Activated naive CD4-positive, alpha-beta T cell treated with anti-CD3 and anti-CD28 coated beads for 36 hours (primary cell): ENCODE measurements at regions of chr1 and their contacts with region 1.

Region 1: GRCh38 chr1:46340404-46341221 is at the start of gene NSUN4:
- DNase-seq: peak; percentile 95
- H3K4me3 Mint-ChIP-seq: peak within 1 kb of the TSS; percentile 99
- H3K27ac Mint-ChIP-seq: peak within 1 kb of the TSS; percentile 100
- H3K4me1 Mint-ChIP-seq: peaks cover 51% of the 10 kb centered on the region
- H3K27me3 Mint-ChIP-seq: no peaks in the 10 kb centered on the region
- total RNA-seq, gene NSUN4: 33.6 to 37.8 TPM

Region 2: DNA sequence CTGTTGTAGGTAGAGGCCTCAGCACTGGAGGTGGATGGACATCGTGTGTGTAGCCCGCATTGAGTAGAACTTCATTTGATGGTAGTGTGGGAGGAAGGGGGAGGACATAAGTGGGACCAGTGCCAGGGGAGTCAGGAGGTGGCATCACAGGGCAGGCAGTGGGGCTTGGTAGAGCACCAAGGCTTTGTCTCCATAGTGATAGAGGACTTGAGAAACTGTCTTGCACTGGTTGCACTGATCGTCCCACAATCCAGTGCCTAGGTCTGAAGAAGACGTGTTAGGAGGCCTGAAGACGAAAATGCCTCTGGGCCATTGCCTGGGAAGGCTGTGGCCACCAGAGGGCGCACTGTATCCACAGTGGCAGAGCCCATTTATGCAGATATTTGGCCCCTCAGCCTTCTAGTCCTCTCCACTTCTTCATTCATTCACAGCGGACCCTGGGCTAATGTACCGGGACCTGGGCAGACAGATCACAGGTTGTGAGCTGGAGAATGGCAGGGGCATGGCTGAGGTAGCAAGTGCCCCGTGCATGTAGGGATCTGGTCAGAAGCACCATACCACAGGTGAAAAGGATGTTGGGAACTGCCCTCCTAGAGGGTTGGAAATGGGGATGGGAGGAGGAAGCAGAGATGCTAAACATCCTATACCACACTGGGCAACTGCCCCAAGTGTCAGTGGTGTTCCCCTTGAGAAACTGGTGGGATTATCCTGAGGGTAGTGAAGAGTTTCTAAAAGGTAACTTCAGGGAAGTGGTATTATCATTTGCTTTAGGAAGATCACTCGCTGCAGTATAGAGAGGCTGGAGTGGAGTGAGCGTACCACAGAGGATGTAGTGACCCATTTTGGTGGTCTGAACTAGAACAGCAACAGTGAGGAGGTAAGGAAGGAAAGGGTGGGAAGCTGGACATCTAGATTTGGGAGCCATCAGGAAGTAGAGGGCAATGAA is 303.4 kb before region 1 on chr1:
- CTCF ChIA-PET with region 1: no interaction called
- intact Hi-C with region 1: loop called (anchors 10 kb)
- DNase-seq: peak; percentile 91
- H3K4me3 Mint-ChIP-seq: no peak overlapping the region
- H3K27ac Mint-ChIP-seq: no peak overlapping the region
- H3K4me1 Mint-ChIP-seq: no peaks in the 10 kb centered on the region
- H3K27me3 Mint-ChIP-seq: no peaks in the 10 kb centered on the region

Region 3: DNA sequence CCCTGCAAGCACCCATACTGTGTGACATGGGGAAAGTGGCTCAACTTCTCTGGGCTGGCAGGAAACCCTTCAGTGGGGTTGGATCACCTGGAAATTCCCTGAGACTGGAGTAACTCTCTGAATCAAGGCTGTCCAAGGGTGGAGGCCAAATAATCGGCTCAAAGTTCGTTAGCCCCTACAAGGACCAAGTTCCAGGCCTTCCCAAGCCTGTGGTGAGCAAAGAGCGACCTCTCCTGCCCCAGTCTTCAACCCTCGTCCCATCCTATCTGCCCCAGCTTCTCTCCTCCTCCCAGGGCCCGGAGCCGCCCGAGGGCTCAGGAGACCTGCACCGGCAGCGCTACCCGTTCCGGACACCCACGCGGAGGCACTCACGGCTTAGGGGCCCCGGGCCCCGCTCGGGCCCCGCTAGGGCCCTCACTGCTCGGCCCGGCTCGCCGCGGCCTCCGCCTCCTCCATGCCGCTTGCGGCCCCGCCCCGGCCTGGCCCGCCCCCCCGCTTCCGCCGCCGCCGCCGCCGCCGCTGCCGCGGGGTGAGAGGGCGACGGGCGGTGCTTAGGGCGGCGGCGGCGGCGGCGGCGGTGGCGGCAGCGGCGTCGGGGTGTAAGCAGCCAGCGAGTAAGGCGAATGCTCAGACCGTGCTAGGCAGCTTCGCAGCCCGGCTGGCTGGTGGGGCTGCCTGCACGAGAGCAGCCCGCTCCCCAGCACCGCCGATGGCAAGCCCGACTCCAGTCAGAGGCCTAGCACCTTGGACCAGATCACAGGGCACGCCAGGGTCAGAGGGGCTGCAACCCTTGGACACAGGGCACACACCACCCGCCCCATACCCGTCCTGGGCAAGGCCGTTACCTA is 142.4 kb before region 1 on chr1 and contains the start of gene POMGNT1:
- CTCF ChIA-PET with region 1: no interaction called
- intact Hi-C with region 1: loop called (anchors 1 kb)
- DNase-seq: peak; percentile 73
- H3K4me3 Mint-ChIP-seq: peak within 1 kb of the TSS; percentile 81
- H3K27ac Mint-ChIP-seq: peak within 1 kb of the TSS; percentile 70
- H3K4me1 Mint-ChIP-seq: peaks cover 29% of the 10 kb centered on the region
- H3K27me3 Mint-ChIP-seq: no peaks in the 10 kb centered on the region
- total RNA-seq, gene POMGNT1: 32.4 to 32.9 TPM

Region 4: GRCh38 chr1:46303038-46303871 is 37.4 kb before region 1 on chr1 and contains the starts of genes LRRC41 and UQCRH:
- CTCF ChIA-PET with region 1: interaction called, 3 read pairs
- intact Hi-C with region 1: loop called (anchors 1 kb)
- DNase-seq: peak; percentile 93
- H3K4me3 Mint-ChIP-seq: peak within 1 kb of the TSS; percentile 98
- H3K27ac Mint-ChIP-seq: peak within 1 kb of the TSS; percentile 94
- H3K4me1 Mint-ChIP-seq: peaks cover 45% of the 10 kb centered on the region
- H3K27me3 Mint-ChIP-seq: no peaks in the 10 kb centered on the region
- total RNA-seq, gene LRRC41: 28.0 to 29.8 TPM
- total RNA-seq, gene UQCRH: 403 to 409 TPM

Region 5: DNA sequence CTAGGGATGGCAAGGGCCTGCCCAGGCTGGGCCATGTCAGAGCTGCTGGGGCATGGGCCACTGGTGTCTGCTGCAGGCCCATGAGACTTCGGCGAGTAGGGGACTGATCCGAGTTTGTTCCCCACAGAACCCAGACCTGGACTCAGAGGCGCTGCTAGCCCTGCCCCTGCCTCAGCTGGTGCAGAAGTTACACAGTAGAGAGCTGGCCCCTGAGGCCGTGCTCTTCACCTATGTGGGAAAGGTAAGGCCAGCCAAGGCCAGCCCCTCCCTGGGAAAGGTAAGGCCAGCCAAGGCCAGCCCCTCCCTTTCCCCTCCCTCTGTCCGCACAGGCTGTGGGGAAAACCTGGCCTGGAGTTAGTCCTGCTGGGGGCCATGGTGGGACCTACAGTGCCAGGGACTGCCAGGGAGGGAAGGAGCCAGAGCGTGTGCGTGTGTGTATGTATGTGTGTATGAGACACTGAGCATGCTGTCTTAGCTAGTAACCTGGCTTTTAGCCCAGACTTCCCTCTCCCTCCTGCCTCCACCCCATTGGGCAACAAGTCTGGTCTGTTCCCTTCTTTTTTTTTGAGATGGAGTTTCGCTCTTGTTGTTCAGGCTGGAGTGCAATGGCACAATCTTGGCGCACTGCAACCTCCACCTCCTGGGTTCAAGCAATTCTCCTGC is 61.5 kb after region 1 on chr1:
- CTCF ChIA-PET with region 1: no interaction called
- intact Hi-C with region 1: no loop called
- DNase-seq: no peak
- H3K4me3 Mint-ChIP-seq: no peak overlapping the region
- H3K27ac Mint-ChIP-seq: no peak overlapping the region
- H3K4me1 Mint-ChIP-seq: no peaks in the 10 kb centered on the region
- H3K27me3 Mint-ChIP-seq: no peaks in the 10 kb centered on the region

Region 6: GRCh38 chr1:46718727-46719622 is 378.4 kb after region 1 on chr1 and contains the start of gene EFCAB14:
- CTCF ChIA-PET with region 1: no interaction called
- intact Hi-C with region 1: loop called (anchors 1 kb)
- DNase-seq: peak; percentile 99
- H3K4me3 Mint-ChIP-seq: peak within 1 kb of the TSS; percentile 92
- H3K27ac Mint-ChIP-seq: peak within 1 kb of the TSS; percentile 84
- H3K4me1 Mint-ChIP-seq: peaks cover 37% of the 10 kb centered on the region
- H3K27me3 Mint-ChIP-seq: no peaks in the 10 kb centered on the region
- total RNA-seq, gene EFCAB14: 35.8 to 38.3 TPM

Region 7: GRCh38 chr1:47313915-47314664 is 973.5 kb after region 1 on chr1 and contains the start of gene STIL:
- CTCF ChIA-PET with region 1: no interaction called
- intact Hi-C with region 1: loop called (anchors 5 kb)
- DNase-seq: peak; percentile 99
- H3K4me3 Mint-ChIP-seq: peak within 1 kb of the TSS; percentile 96
- H3K27ac Mint-ChIP-seq: peak within 1 kb of the TSS; percentile 95
- H3K4me1 Mint-ChIP-seq: peaks cover 10% of the 10 kb centered on the region
- H3K27me3 Mint-ChIP-seq: no peaks in the 10 kb centered on the region
- total RNA-seq, gene STIL: 41.4 to 43.5 TPM